ENCODE measurements at regions of chr17 and their contacts with region 1.

Region 1: DNA sequence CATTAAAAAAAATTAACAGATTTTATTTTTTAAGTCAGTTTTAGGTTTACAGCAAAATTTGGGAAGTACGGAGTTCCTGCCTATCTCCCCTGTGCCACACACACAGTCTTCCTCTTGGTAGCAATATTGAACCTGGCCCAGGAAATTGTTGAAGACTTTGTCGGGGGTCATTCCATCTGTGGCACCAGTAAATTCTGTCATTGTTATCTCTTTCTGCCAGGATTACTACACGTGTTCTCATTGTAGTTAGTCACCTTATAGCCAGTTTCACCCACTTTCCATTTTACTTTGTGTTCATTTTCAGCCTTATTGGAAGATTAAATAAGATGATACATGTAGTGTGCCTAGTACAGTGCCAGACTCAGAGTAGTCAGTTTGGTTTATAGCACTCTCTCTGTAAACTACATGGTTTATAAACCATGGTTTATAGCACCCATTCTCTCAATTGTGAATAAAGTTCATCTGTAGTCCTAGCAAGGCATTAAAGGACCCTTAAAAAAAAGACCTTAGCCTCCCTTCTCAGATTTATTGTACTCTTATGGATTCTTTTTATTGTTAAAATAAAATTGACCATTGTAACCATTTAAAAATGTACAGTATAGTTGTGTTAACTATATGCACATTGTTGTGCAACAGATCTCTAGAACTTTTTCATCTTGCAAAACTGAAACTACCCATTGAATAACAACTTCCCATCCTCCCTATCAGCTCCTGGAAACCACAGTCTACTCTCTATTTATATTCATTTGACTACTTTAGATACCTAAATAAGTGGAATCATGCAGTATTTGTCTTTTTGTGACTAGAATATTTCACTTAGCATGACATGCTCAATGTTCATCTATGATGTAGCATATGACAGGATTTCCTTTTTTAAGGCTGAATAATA is 36.1 kb downstream of the NLK start:
- DNase-seq: no peak
- ATAC-seq: no peak
- H3K4me3 ChIP-seq: no peak overlapping the region
- H3K27ac ChIP-seq: no peak overlapping the region
- H3K4me1 ChIP-seq: peaks cover 4% of the 10 kb centered on the region
- H3K27me3 ChIP-seq: no peaks in the 10 kb centered on the region
- CTCF ChIP-seq: no peak
- EP300 ChIP-seq: no peak
- POLR2A ChIP-seq: no peak
- RAD21 ChIP-seq: no peak

Region 2: GRCh38 chr17:27846042-27846655 is 232.4 kb before region 1 on chr17:
- CTCF ChIA-PET with region 1: no interaction called
- POLR2A ChIA-PET with region 1: interaction called, 11 read pairs
- RAD21 ChIA-PET with region 1: no interaction called
- SMC1A ChIA-PET with region 1: no interaction called
- in situ Hi-C with region 1: no loop called
- intact Hi-C with region 1: no loop called
- DNase-seq: no peak
- ATAC-seq: no peak
- H3K4me3 ChIP-seq: no peak overlapping the region
- H3K27ac ChIP-seq: no peak overlapping the region
- H3K4me1 ChIP-seq: peaks cover 3% of the 10 kb centered on the region; the same call in 1 of the 2 replicates
- H3K27me3 ChIP-seq: no peaks in the 10 kb centered on the region
- CTCF ChIP-seq: no peak
- EP300 ChIP-seq: no peak
- POLR2A ChIP-seq: no peak
- RAD21 ChIP-seq: no peak

Region 3: GRCh38 chr17:28065706-28066105 is 12.9 kb before region 1 on chr17:
- CTCF ChIA-PET with region 1: interaction called, 5 read pairs
- POLR2A ChIA-PET with region 1: no interaction called
- RAD21 ChIA-PET with region 1: interaction called, 3 read pairs
- SMC1A ChIA-PET with region 1: interaction called, 11 read pairs
- in situ Hi-C with region 1: no loop called
- intact Hi-C with region 1: no loop called
- DNase-seq: no peak
- ATAC-seq: no peak
- H3K4me3 ChIP-seq: no peak overlapping the region
- H3K27ac ChIP-seq: no peak overlapping the region
- H3K4me1 ChIP-seq: no peaks in the 10 kb centered on the region
- H3K27me3 ChIP-seq: no peaks in the 10 kb centered on the region
- CTCF ChIP-seq: no peak
- EP300 ChIP-seq: no peak
- POLR2A ChIP-seq: no peak
- RAD21 ChIP-seq: no peak

Region 4: DNA sequence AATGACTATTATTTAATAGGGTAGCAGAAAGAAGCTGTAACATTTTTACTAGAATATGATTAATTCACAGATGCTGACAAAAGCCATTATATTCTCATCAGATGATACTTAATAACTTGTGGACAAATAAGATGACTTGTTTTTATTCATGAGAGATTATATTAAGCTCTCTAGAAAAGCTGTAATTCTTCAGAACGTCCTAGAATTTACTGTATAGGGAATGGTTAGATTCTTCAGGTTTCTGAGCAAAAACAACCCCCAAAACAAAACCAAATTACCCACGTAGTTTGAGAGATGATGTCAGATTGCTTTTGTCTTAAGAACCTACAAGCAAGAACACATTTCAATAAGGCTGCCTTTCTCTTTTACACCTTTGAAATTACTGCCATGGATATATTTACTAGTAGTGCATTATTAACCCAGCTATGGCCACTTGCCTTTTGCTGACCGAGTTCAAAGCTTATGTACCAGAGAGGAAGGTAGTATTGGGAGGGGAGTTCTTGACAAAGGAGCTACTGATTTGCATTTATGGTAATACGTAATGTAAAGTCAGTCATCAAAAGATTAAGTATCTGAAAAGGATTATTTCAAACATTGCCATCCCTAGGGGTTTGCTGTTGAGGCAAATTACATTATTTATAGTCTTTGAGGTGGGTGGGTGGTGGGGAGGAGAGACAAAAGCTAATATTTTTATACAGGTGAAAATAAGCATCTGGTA is 15.6 kb after region 1 on chr17:
- CTCF ChIA-PET with region 1: interaction called, 5 read pairs
- POLR2A ChIA-PET with region 1: interaction called, 3 read pairs
- RAD21 ChIA-PET with region 1: no interaction called
- SMC1A ChIA-PET with region 1: interaction called, 15 read pairs
- in situ Hi-C with region 1: no loop called
- intact Hi-C with region 1: no loop called
- DNase-seq: no peak
- ATAC-seq: peak; percentile 21; the same call in 1 of the 3 replicates
- H3K4me3 ChIP-seq: no peak overlapping the region
- H3K27ac ChIP-seq: no peak overlapping the region
- H3K4me1 ChIP-seq: peaks cover 10% of the 10 kb centered on the region; the same call in 1 of the 2 replicates
- H3K27me3 ChIP-seq: no peaks in the 10 kb centered on the region
- CTCF ChIP-seq: no peak
- EP300 ChIP-seq: no peak
- POLR2A ChIP-seq: no peak
- RAD21 ChIP-seq: no peak